ENCODE measurements at regions of chr5 and their contacts with region 1.

Region 1: GRCh38 chr5:69492391-69492922 is at the start of gene OCLN:
- DNase-seq: peak; percentile 78
- ATAC-seq: peak; percentile 93
- H3K4me3 ChIP-seq: peak within 1 kb of the TSS; percentile 83 to 96 (median 92)
- H3K27ac ChIP-seq: peak within 1 kb of the TSS; percentile 77
- H3K4me1 ChIP-seq: peaks cover 63% of the 10 kb centered on the region
- H3K27me3 ChIP-seq: no peaks in the 10 kb centered on the region; a peak in 1 of 5 replicates
- CTCF ChIP-seq: peak; percentile 56
- EP300 ChIP-seq: no peak; a peak in 1 of 4 replicates
- POLR2A ChIP-seq: peak; percentile 64 to 87
- RAD21 ChIP-seq: 0 out of 2 replicates have a peak, but pooled peaks have one; percentile 21
- total RNA-seq, gene OCLN: 28.4 and 34.8 TPM in 2 replicates

Region 2: GRCh38 chr5:69331528-69332445 is 160.7 kb before region 1 on chr5:
- CTCF ChIA-PET with region 1: no interaction called
- POLR2A ChIA-PET with region 1: no interaction called
- in situ Hi-C with region 1: no loop called
- intact Hi-C with region 1: no loop called
- DNase-seq: peak; percentile 86
- ATAC-seq: peak; percentile 85
- H3K4me3 ChIP-seq: peak overlapping the region; percentile 69 to 85 (median 85)
- H3K27ac ChIP-seq: peak overlapping the region; percentile 90
- H3K4me1 ChIP-seq: peaks cover 51% of the 10 kb centered on the region
- H3K27me3 ChIP-seq: no peaks in the 10 kb centered on the region
- CTCF ChIP-seq: no peak
- EP300 ChIP-seq: no peak
- POLR2A ChIP-seq: peak; percentile 35 to 81; a peak in 2 of 4 replicates
- RAD21 ChIP-seq: no peak

Region 3: DNA sequence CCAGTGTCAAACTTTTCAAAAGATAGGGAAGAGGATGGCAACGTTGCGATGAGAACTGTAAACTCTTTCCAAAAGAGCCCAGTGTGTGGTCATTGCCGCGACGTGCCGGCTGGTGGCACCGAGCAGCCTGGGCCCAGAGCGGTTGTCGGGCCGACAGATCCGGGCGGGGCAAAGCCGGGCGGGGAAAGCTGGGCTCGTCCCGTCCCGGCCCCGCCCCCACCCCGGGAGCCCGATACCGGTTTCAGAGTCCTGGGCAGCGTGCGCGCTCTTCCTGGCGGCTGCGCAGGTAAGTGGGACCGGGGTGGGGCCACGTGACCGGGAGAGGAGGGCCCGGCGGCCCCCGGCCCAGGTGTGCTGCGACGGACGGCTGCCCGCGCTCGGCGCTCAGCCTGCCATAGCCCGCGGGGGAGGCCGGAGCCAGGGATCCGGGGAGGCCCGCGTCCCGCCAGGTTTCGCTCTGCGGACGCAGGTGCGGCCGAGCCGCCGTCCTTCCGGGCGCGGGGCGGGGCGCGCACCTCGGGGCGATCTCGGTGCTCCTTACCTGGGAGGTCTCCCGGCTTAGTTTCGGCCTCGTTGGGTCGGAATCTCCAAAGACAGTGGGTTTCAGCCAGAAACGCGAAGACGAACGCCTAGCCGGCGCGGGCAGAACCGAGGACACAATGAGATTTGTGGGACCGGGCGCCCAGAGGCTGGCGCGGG is 77.4 kb before region 1 on chr5 and contains the start of gene MARVELD2:
- CTCF ChIA-PET with region 1: no interaction called
- POLR2A ChIA-PET with region 1: no interaction called
- in situ Hi-C with region 1: loop called (anchors 5 kb)
- intact Hi-C with region 1: loop called (anchors 1 kb)
- DNase-seq: peak; percentile 81
- ATAC-seq: peak; percentile 98
- H3K4me3 ChIP-seq: peak within 1 kb of the TSS; percentile 79 to 97 (median 92)
- H3K27ac ChIP-seq: peak within 1 kb of the TSS; percentile 67
- H3K4me1 ChIP-seq: peaks cover 22% of the 10 kb centered on the region
- H3K27me3 ChIP-seq: no peaks in the 10 kb centered on the region
- CTCF ChIP-seq: peak; percentile 90
- EP300 ChIP-seq: 0 out of 4 replicates have a peak, but pooled peaks of 1 of the 2 experiments have one; percentile 9
- POLR2A ChIP-seq: peak; percentile 45 to 70; a peak in 3 of 4 replicates
- RAD21 ChIP-seq: peak; percentile 96
- total RNA-seq, gene MARVELD2: 13.0 and 15.4 TPM in 2 replicates

Region 4: DNA sequence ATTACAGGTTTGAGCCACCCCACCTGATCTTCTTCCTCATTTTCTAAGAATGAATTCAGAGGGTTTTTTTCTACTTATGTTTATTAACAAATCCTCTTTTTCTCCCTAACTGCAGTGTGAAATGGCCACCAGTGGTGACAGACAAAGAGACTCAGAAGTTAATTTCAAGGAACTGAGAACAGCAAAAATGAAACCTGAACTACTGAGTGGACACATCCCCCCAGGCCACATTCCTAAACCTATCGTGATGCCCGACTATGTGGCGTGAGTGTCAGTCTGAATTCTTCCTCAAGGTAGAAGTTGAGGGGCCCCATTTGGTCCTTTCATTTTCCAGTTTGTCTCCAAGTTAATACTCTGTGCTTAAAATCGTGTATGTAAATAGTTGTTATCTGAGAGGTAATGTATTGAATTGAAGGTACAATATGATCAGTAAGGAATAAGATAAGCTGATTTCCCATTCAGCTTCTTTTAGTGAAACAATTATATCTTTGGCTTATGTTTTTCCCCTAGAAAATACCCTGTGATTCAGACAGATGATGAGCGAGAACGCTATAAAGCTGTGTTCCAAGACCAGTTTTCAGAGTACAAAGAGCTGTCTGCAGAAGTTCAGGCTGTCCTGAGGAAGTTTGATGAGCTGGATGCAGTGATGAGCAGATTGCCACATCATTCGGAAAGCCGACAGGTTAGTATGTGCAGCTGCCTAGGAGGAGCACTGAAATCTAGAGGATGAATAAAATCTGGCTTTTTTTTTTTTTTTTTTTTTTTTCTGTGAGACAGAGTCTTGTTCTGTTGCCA is 59.8 kb before region 1 on chr5:
- CTCF ChIA-PET with region 1: no interaction called
- POLR2A ChIA-PET with region 1: no interaction called
- in situ Hi-C with region 1: no loop called
- intact Hi-C with region 1: loop called (anchors 5 kb)
- DNase-seq: no peak
- ATAC-seq: no peak
- H3K4me3 ChIP-seq: no peak overlapping the region
- H3K27ac ChIP-seq: no peak overlapping the region
- H3K4me1 ChIP-seq: peaks cover 5% of the 10 kb centered on the region
- H3K27me3 ChIP-seq: no peaks in the 10 kb centered on the region
- CTCF ChIP-seq: no peak
- EP300 ChIP-seq: no peak
- POLR2A ChIP-seq: no peak
- RAD21 ChIP-seq: no peak

Region 5: DNA sequence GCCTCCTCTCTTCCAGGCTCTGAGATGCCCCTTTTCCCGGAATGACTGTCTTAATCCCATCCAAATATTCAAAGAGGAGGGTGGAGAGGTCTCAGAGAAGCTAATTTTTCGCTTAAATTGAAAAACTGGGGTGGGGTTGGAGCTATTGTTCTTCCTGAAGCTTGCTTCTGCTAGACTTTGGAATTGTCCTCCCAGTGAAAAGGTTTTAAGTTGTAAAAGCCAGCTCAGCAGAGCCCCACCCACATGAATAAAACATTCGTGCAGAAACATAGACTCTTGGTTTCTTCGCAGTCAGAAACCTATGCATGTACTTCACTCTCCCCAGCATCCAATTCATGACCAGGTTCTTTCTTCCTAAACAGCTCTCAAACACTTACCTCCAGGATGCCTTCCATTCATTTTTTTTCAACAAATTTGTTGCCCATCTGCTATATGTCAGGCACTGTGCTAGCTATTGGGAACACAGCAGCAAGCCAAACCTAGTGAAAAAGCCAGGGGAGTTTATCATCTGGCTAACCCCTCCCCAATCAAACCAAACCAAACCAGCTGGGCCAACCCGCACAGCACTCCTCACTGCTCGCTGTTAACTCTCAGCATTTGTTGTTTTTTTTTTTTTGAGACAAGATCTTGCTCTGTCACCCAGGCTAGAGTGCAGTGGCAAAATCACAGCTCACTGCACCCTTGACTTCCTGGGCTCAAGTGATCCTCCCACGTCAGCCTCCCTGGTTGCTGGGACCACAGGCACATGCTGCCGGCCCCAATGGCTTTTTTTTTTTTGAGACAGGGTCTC is 37.8 kb before region 1 on chr5:
- CTCF ChIA-PET with region 1: no interaction called
- POLR2A ChIA-PET with region 1: interaction called, 14 read pairs
- in situ Hi-C with region 1: no loop called
- intact Hi-C with region 1: loop called (anchors 5 kb)
- DNase-seq: peak; percentile 45
- ATAC-seq: peak; percentile 69
- H3K4me3 ChIP-seq: peak overlapping the region; percentile 49 to 63 (median 60); a peak in 5 of 6 replicates
- H3K27ac ChIP-seq: peak overlapping the region; percentile 84
- H3K4me1 ChIP-seq: peaks cover 68% of the 10 kb centered on the region
- H3K27me3 ChIP-seq: no peaks in the 10 kb centered on the region
- CTCF ChIP-seq: no peak
- EP300 ChIP-seq: no peak
- POLR2A ChIP-seq: no peak
- RAD21 ChIP-seq: no peak

Region 6: GRCh38 chr5:69517763-69518212 is 25.3 kb after region 1 on chr5:
- CTCF ChIA-PET with region 1: no interaction called
- POLR2A ChIA-PET with region 1: interaction called, 12 read pairs
- in situ Hi-C with region 1: no loop called
- intact Hi-C with region 1: no loop called
- DNase-seq: peak; percentile 79
- ATAC-seq: peak; percentile 83
- H3K4me3 ChIP-seq: no peak overlapping the region; a peak in 1 of 6 replicates
- H3K27ac ChIP-seq: peak overlapping the region; percentile 59
- H3K4me1 ChIP-seq: peaks cover 45% of the 10 kb centered on the region
- H3K27me3 ChIP-seq: no peaks in the 10 kb centered on the region
- CTCF ChIP-seq: no peak
- EP300 ChIP-seq: peak in 1 of 2 experiments; percentile 45; a peak in 1 of 4 replicates
- POLR2A ChIP-seq: no peak
- RAD21 ChIP-seq: no peak

Measured in HepG2 (cell line).